Activated naive CD4-positive, alpha-beta T cell treated with anti-CD3 and anti-CD28 coated beads for 36 hours (primary cell): ENCODE measurements at regions of chr10 and their contacts with region 1.

Region 1: GRCh38 chr10:58152673-58153263 is 114.9 kb downstream of the IPMK start:
- DNase-seq: peak; percentile 75
- H3K4me3 Mint-ChIP-seq: no peak overlapping the region
- H3K27ac Mint-ChIP-seq: no peak overlapping the region
- H3K4me1 Mint-ChIP-seq: peaks cover 2% of the 10 kb centered on the region
- H3K27me3 Mint-ChIP-seq: peaks cover 28% of the 10 kb centered on the region

Region 2: DNA sequence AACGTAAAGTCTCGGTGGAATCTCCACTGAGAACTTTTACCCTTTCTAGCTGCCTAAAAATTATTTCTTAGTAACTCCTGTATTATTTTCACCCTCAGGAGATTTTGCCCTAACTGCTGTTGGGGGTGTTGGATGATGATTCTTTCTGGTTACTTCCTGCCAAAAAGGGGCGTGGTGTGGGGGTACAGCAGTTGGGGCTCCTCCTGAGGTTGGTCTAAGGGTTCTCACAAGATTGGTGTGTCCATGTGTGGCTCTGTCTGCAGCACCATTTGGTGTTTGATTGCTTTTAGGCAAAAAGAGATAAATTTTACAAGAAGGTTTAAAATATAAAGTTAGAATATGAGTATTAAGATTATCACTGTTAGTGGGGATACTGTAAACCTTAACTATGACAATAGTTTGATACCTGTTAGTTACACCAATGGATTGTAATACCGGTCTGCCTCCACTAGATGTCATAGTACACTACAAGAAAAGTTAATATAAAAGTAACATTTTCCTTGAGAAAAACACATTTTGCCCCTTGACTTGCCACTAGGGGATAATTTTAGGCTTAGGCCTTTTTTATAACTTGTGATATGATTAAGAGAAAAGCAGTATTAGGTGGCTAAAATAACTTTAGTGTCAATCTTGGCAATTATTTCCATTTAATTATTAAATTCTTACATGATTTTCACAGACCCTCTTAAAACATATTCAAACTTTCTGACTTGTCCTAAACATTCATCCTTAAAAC is 813.8 kb before region 1 on chr10:
- CTCF ChIA-PET with region 1: interaction called, 4 read pairs
- intact Hi-C with region 1: loop called (anchors 1 kb)
- DNase-seq: peak; percentile 4
- H3K4me3 Mint-ChIP-seq: no peak overlapping the region
- H3K27ac Mint-ChIP-seq: no peak overlapping the region
- H3K4me1 Mint-ChIP-seq: no peaks in the 10 kb centered on the region
- H3K27me3 Mint-ChIP-seq: no peaks in the 10 kb centered on the region

Region 3: DNA sequence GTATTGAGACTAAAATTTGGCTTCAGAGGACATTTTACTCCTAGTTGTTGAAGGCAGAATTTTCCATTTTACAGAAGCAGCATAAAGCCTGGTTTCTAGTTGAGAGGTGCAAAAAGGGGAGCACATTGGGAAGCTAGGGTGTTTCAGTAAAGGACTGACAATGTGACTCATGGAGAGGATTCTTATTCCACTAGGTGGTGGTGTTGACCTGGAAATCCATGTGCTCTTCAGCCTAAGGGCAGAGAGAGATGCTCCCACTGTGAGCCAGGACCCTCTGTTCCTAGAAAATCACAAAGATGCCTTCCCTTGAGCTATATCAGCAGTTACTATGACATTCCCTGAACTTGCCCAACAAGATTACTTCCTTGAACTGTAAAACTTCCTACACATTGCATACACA is 572.8 kb before region 1 on chr10:
- CTCF ChIA-PET with region 1: no interaction called
- intact Hi-C with region 1: loop called (anchors 1 kb)
- DNase-seq: no peak
- H3K4me3 Mint-ChIP-seq: no peak overlapping the region
- H3K27ac Mint-ChIP-seq: no peak overlapping the region
- H3K4me1 Mint-ChIP-seq: no peaks in the 10 kb centered on the region
- H3K27me3 Mint-ChIP-seq: no peaks in the 10 kb centered on the region

Region 4: DNA sequence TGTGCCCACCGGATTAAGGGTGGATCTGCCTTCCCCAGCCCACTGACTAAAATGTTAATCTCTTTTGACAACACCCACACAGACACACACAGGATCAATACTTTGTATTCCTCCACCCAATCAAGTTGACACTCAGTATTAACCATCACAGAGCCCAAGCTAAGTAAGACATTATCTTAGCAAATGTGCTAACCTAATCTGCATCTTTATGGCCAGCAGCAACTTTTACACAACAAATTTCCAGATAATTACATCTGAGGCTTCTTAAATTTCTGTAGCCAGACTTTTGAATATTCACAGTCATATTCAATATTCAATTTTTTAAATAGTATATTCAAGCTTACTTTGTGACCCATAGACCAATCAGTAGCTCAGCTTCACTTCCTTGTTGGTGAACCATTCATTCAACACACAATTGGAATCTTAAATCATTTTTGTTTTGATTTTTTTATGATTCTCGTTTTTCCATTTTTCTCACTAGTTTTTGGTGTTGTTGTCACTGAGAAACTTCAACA is 479.3 kb before region 1 on chr10:
- CTCF ChIA-PET with region 1: no interaction called
- intact Hi-C with region 1: loop called (anchors 10 kb)
- DNase-seq: no peak
- H3K4me3 Mint-ChIP-seq: no peak overlapping the region
- H3K27ac Mint-ChIP-seq: no peak overlapping the region
- H3K4me1 Mint-ChIP-seq: no peaks in the 10 kb centered on the region
- H3K27me3 Mint-ChIP-seq: no peaks in the 10 kb centered on the region

Region 5: GRCh38 chr10:58017719-58018367 is 134.9 kb before region 1 on chr10:
- CTCF ChIA-PET with region 1: no interaction called
- intact Hi-C with region 1: no loop called
- DNase-seq: no peak
- H3K4me3 Mint-ChIP-seq: no peak overlapping the region
- H3K27ac Mint-ChIP-seq: no peak overlapping the region
- H3K4me1 Mint-ChIP-seq: no peaks in the 10 kb centered on the region
- H3K27me3 Mint-ChIP-seq: no peaks in the 10 kb centered on the region

Region 6: DNA sequence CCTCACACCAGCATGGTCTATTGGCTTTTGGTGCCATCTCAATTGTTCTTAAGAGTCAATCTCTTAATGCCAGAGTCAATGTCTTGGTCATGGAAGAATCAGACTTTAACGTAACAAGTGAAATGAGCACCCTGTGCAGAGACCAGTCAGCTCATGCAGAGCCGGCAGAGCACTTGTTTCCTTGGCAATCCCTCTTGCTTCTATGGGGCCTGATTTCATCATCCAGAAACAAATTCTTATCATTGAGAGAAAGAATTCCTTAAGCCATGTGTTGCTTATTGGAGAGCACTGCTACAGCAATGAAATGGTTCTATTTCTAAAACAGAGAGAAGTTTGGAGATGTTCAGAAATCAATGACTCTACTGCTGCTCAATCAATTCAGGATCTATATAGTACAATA is 97.9 kb before region 1 on chr10:
- CTCF ChIA-PET with region 1: no interaction called
- intact Hi-C with region 1: no loop called
- DNase-seq: no peak
- H3K4me3 Mint-ChIP-seq: no peak overlapping the region
- H3K27ac Mint-ChIP-seq: no peak overlapping the region
- H3K4me1 Mint-ChIP-seq: no peaks in the 10 kb centered on the region
- H3K27me3 Mint-ChIP-seq: peaks cover 6% of the 10 kb centered on the region

Region 7: DNA sequence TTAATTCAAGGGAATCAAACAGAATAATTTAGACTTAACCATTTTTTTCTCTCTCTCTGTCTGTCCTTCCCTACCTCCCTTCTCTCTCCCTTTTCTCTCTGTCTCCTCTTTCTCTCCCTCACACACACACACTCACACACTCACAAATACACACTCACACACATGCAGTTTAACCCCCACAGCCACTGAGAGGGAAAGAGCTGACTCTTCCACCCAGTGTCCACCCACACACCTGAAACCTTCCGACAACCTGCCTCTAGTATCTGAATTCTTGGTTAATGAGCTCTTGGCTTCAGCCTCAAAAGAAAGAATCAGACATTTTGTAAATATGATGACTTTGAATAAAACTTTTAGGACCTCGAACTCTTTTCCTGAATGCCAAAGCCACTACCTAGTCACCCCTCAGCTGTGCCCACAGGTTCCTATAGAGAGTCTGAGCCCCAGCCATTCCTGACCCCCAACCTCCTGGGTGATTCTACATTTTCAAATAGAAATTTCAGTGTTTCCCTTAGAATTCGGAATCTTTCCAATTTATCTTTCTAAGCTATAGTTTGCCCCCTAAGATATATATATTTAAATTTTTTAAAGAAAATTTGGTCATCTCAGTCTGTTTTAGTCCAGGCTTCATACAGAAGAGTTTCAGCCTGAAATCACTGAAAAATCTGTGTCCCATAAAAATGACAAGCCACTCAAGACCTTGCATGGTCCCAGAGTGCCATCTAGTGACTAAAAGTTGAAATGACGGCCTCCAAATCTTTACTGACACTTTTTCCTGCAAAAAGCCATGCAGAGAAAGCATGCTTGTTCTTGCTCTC is 87.8 kb before region 1 on chr10:
- CTCF ChIA-PET with region 1: no interaction called
- intact Hi-C with region 1: loop called (anchors 1 kb)
- DNase-seq: peak; percentile 10
- H3K4me3 Mint-ChIP-seq: no peak overlapping the region
- H3K27ac Mint-ChIP-seq: no peak overlapping the region
- H3K4me1 Mint-ChIP-seq: no peaks in the 10 kb centered on the region
- H3K27me3 Mint-ChIP-seq: peaks cover 16% of the 10 kb centered on the region